Endothelial cell of umbilical vein (primary cell): ENCODE measurements at regions of chr5 and their contacts with region 1.

Region 1: DNA sequence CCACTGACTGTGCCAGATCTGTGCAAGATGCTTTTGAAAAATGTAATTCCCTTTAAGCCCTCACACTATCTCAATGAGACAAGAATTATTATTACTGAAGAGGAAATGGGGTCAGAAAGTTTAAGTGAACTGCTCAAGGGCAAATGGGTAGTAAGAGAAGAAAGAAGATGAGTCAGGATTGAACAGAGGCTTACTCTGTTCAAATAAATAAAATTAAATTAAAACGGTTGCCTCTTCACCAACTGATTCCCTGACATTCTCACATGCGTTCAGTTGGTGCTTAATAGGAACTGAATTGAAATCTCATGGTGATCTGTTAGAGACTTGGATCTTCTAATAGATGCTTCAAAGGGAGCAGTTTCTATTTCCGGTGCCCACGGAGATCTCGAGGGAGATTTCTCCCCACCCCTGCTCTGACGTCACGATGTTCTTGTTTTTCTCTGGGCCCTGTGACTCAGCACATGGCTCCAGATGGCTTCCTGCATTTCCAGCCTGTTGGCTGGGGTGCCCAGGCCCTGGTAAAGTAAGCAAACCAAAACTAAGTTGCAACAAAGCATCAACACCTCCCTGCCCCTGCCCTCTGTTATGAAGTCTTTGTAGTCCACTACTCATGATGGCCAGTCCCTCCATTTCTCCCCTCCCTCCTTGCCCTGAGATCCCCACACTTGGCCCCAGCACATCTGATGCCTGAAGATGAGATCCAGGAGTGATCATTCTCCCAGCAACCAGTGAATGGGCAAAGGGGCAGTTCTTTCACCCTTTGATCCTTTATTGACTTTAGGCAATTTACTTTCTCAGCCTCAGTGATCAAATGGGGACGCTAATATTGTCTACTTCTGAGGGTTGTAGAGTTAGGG is 106.1 kb upstream of the CPEB4 start:
- DNase-seq: peak; percentile 94
- H3K4me3 ChIP-seq: no peak overlapping the region
- H3K27ac ChIP-seq: peak overlapping the region; percentile 99
- H3K4me1 ChIP-seq: peaks cover 34% of the 10 kb centered on the region
- H3K27me3 ChIP-seq: no peaks in the 10 kb centered on the region
- CTCF ChIP-seq: no peak
- POLR2A ChIP-seq: peak; percentile 42

Region 2: DNA sequence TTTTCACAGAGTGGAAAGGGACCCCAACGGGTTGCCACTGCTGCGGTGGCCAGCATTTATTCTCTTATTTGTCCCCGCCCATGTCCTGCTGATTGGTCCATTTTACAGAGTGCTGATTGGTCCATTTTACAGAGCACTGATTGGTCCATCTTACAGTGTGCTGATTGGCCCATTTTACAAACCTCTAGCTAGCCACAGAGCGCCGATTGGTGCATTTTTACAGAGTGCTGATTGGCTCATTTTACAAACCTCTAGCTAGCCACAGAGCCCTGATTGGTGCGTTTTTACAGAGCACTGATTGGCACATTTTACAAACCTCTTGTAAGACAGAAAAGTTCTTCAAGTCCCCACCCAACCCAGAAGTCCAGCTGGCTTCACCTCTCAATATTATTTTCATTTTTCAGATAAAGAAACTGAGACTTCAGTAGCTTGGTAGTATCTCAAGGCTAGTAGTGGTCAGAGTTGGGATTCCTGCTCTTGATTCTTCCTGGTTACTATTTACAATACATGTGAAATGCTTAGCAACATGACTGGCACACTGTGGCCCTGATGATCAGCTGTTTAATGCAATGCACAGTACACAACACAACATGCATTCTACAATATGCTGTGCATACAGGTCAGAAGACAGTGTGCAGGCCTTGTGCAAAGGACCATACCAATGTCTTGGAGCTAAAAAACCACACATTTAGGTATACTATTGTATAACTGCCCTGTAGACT is 102.0 kb before region 1 on chr5:
- CTCF ChIA-PET with region 1: no interaction called
- POLR2A ChIA-PET with region 1: no interaction called
- dilution Hi-C with region 1: no loop called
- intact Hi-C with region 1: no loop called
- DNase-seq: no peak
- H3K4me3 ChIP-seq: no peak overlapping the region
- H3K27ac ChIP-seq: no peak overlapping the region
- H3K4me1 ChIP-seq: no peaks in the 10 kb centered on the region
- H3K27me3 ChIP-seq: no peaks in the 10 kb centered on the region
- CTCF ChIP-seq: no peak
- POLR2A ChIP-seq: no peak

Region 3: DNA sequence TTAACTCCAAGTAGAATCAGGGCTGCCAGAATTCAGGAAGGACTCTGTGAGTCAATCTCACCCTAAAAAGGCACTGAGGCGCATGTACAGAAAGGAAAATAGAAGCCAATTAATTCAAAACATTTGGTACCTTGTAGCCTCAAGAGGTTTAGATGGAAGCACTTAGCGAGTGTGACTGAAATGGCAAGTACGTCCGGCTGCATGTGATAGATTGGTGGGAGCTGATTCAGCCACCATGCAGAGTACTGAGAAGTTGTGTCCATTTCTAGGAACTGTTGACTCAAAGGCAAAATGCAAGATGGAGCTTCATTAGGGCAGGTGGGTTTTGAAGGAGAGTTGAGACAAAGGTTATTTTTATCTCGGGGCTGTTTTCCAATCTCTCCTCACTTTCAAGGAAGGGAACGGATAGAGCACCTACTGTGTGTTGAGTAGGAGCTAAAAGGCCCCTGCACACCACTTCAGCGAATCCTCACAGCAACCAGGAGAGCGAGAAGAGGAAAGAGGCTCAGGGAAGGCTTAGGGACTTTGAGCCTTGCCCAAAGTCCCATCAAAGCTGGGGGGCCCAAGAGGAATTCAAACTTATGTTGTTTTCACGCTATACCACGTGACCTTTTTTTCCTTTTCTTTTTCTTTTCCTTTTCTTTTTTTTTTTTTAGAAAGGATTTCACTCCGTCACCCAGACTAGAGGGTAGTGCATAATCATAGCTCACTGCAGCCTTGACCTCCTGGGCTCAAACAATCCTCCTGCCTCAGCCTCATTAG is 71.5 kb after region 1 on chr5:
- CTCF ChIA-PET with region 1: no interaction called
- POLR2A ChIA-PET with region 1: no interaction called
- dilution Hi-C with region 1: no loop called
- intact Hi-C with region 1: loop called (anchors 1 kb)
- DNase-seq: no peak
- H3K4me3 ChIP-seq: no peak overlapping the region
- H3K27ac ChIP-seq: no peak overlapping the region
- H3K4me1 ChIP-seq: peaks cover 12% of the 10 kb centered on the region
- H3K27me3 ChIP-seq: no peaks in the 10 kb centered on the region
- CTCF ChIP-seq: no peak
- POLR2A ChIP-seq: no peak

Region 4: GRCh38 chr5:173887610-173888472 is 105.8 kb after region 1 on chr5 and contains the start of gene CPEB4:
- CTCF ChIA-PET with region 1: no interaction called
- POLR2A ChIA-PET with region 1: interaction called, 3 read pairs
- dilution Hi-C with region 1: no loop called
- intact Hi-C with region 1: loop called (anchors 1 kb)
- DNase-seq: peak; percentile 99
- H3K4me3 ChIP-seq: peak within 1 kb of the TSS; percentile 76 to 84 (median 79)
- H3K27ac ChIP-seq: peak within 1 kb of the TSS; percentile 82
- H3K4me1 ChIP-seq: peaks cover 42% of the 10 kb centered on the region
- H3K27me3 ChIP-seq: no peaks in the 10 kb centered on the region
- CTCF ChIP-seq: no peak
- POLR2A ChIP-seq: peak; percentile 89
- total RNA-seq, gene CPEB4: 16.4 and 18.1 TPM in 2 replicates

Region 5: DNA sequence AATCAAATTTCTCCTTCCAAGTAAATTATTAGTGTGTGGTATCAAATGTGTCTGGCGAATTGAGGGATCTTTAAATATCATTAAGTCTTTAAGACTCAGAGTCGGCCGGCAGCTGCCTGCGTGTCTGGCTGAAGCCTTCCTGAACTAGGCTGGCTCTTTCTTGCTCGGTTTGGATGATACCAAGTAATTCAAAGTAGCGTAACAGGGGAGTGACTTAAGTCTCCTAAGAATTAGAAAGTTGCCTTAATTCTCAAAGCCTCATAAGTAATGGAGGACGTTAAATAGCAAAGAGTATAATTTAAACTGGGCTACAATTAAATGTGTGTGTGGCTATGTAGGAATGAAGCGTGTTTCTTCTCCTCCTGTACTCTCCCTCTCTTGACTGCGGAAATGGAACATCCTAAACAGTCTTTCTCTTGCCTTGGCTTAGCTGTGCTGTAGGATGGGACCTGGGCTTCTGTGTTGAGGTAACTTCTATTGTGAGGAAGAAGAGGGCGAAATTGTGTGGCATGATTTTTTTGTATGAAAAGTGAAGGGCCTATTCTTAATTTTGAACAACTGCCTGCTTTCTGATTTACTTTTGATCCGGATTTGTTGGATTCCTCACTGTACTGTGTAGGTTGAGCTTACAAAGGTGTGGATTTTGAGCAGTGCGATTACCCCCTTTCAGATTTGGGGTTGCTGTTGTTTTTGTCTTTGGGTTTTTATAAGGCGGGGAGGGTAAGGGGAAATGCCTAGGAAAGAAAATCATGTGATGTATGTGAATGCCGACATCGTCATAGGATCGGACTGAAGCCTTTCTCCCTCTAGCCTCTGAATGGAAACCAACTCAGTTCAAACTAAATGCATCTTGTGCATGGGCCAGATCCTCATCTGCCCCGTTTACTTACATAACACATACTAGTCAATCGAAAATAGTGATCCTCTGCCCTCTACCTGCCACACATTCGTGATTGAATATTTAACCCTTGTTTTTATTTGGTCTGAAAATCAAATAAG is 136.0 kb after region 1 on chr5:
- CTCF ChIA-PET with region 1: no interaction called
- POLR2A ChIA-PET with region 1: no interaction called
- dilution Hi-C with region 1: no loop called
- intact Hi-C with region 1: loop called (anchors 1 kb)
- DNase-seq: peak; percentile 93
- H3K4me3 ChIP-seq: peak overlapping the region; percentile 44 to 93 (median 65)
- H3K27ac ChIP-seq: peak overlapping the region; percentile 99
- H3K4me1 ChIP-seq: peaks cover 28% of the 10 kb centered on the region
- H3K27me3 ChIP-seq: no peaks in the 10 kb centered on the region
- CTCF ChIP-seq: no peak
- POLR2A ChIP-seq: peak; percentile 94